Activated CD4-positive, alpha-beta memory T cell treated with anti-CD3 and anti-CD28 coated beads, Interleukin-2, amount 10 ng/mL, durations not matched to agents 7 days and 5 days (primary cell): ENCODE measurements at regions of chr2 and their contacts with region 1.

Region 1: DNA sequence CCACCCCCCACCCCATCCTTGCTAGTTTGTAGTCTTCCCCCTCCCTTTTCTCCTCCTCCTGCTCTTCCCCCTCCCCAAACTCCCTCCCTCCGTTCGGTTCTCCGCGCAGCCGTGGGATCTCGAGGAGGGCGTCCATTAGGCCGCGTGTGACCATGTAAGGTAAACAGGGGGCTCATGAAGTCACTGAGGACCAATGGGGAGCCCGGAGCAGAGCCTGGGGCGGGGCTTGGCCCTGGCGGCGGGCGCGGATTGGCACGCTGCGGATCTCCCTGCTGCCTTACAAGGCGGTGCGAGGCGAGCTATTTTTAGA is 246 bp upstream of the KLF7 start:
- DNase-seq: peak; percentile 98
- H3K4me3 Mint-ChIP-seq: peak overlapping the region; percentile 98
- H3K27ac Mint-ChIP-seq: peak overlapping the region; percentile 93
- H3K4me1 Mint-ChIP-seq: peaks cover 39% of the 10 kb centered on the region
- H3K27me3 Mint-ChIP-seq: peaks cover 9% of the 10 kb centered on the region

Region 2: DNA sequence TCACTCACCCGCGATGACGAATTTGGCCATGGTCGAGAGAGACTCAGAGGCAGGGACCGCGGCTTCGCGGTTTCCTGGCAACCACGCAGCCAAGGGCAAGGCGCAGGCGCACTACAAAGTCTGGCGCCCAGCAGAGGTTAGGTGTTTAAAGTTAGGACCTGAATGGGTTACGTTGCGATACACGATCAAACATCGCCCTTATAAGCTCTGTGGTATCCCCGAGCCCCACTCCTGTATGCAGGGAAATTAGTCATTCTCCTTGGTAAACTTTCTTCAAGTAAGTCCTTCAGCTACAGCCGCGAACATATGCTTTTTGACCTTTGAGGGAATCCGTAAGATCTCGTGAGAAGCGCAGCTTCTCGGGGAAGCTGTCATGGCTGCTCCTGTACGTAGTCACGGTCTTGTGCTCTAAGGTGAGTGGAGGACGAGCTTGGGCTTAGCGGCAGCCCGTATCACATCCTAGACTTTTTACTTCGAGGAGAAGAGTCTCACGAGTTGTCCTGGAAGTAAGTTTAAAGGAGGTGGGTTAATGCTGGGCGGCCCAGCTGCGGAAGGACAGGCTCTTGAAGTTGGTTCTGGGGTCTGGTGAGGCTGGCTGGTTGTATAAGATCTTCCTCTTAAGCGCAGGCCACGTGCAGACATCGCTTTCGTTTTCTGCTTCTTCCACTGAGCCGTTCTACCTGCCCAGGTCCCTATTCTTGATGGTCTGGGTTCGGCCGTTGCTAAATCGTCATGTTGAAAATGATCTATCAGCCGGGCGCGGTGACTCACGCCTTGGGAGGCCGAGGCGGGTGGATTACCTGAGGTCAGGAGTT is 400.5 kb before region 1 on chr2 and contains the starts of genes FASTKD2 and MDH1B:
- CTCF ChIA-PET with region 1: no interaction called
- POLR2A ChIA-PET with region 1: interaction called, 13 read pairs
- DNase-seq: peak; percentile 88
- H3K4me3 Mint-ChIP-seq: peak within 1 kb of the TSS; percentile 88
- H3K27ac Mint-ChIP-seq: peak within 1 kb of the TSS; percentile 89
- H3K4me1 Mint-ChIP-seq: peaks cover 34% of the 10 kb centered on the region
- H3K27me3 Mint-ChIP-seq: peaks cover 3% of the 10 kb centered on the region
- total RNA-seq, gene FASTKD2: 15.4 to 15.7 TPM
- total RNA-seq, gene MDH1B: 0.08 to 0.15 TPM

Region 3: DNA sequence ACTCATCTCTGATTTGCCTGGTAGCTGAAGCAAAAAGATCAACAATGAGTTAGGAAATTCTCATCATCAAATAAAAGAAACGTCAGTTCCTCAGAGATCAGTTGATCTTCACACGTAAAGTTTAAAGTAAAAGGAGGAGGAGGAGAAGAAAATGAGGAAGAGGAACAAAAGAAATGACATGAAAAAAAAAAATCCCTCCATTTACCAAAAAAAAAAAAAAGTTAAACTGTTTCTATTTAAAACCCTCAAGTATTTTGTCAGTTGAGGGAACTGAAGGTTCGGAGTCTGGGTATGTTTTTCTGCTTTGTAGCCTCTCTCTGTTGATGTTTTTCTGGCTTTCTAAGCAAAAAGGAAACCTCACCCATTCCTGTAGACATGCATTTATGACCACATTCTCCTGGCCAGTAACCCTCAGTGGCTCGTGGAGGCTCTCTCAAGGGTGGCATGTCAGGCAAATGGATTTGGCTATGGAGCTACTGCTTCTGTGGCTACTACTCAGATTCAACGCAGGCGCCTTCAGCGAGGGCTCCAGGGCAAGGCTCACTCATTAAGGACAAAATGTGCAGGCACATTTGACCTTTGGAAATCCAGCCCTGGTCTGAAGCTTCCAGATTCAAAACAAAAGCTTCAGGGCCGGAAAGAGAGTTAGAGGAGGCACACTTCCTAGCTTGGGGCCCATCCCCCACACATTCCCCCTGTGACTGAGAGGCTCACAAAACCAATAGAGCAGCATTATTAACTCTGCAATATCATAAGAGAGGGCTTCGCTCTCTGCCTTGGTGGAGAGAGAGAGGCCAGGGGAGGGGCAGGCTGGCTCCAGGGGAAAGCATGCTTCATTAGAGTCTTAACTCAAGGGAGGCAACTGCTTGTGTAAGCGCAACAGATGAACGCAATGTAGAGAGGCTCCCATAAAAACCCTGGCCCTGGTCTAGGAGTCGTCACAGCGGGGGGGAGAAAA is 22.5 kb before region 1 on chr2:
- CTCF ChIA-PET with region 1: interaction called, 49 read pairs
- POLR2A ChIA-PET with region 1: interaction called, 276 read pairs
- DNase-seq: peak; percentile 75
- H3K4me3 Mint-ChIP-seq: peak overlapping the region; percentile 63
- H3K27ac Mint-ChIP-seq: peak overlapping the region; percentile 98
- H3K4me1 Mint-ChIP-seq: peaks cover 64% of the 10 kb centered on the region
- H3K27me3 Mint-ChIP-seq: no peaks in the 10 kb centered on the region

Region 4: DNA sequence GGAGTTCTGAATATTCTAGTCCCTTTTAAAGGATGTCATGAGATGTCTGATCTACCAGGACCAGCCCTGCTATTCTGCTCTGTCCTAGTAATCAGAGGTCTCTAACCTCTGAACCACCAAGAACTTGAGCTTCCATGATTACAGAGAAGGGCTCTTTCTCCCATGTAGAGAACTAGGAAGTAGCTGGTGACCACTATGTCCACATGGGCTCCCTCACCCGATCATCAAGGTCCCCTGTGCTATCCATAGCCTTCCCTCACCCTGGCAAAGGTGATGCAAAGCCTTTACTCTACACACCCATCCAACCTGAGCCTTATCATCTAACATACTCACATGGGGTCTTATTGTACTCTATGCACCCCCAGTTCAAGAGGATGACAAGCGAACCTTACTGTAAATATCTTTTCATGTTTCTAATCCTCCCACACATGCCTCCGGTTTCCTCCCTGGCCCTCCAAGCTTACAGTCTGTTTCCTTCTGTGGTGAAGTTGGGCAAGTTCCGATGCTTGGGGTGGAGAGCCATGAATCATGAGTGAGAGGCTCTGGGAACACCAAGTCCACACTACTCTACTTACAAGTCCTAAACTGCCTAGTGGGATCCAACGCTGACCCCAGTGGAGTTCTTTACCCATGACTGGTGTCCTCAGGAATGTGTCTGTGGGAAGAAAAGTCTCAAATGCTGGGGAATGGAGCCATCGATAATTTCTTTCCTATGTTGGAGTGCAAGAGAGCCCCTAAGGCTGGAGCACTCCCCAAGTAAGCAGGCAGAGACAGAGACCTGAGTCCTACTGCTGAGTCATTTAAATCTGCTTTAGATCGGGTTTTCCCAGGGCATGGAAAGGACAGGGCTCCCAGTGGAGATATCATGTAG is 73.1 kb after region 1 on chr2:
- CTCF ChIA-PET with region 1: no interaction called
- POLR2A ChIA-PET with region 1: interaction called, 14 read pairs
- DNase-seq: peak; percentile 28
- H3K4me3 Mint-ChIP-seq: no peak overlapping the region
- H3K27ac Mint-ChIP-seq: no peak overlapping the region
- H3K4me1 Mint-ChIP-seq: peaks cover 15% of the 10 kb centered on the region
- H3K27me3 Mint-ChIP-seq: no peaks in the 10 kb centered on the region

Region 5: DNA sequence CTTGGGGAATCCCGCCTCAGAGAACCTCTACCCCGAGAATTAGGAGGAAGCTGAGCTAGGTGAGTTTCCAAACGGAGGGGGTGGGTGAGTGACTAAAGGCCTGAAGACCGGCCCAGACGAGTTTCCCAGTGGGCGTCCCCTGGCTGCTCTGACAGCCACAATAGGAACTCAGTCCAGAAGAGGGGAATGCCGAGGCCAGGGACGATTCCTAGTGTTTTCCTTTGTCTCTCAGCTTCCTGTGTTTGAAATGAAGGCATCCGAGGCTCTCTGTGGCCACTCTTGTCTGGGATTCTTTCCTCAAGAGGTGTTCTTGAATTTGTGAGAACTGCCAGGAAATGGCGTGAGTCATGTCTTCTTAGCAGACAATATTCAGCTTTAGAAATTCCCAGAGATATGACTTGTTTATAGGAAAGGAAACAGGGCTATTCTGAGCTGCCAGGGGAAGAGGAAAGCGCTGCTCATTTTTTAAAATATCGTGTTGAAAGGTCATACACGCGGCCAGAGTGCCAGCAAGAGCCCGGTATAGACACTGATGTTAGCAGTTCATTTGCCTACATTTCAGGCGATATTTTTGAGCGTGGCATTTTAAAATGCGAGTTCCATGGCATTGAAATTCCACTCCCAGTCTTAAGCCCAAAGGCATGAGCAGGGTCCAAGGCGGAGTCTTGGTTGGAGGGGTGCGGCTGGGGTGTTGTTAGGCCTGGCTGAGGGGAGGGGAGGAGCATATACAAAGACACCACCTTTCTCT is 168.8 kb after region 1 on chr2:
- CTCF ChIA-PET with region 1: interaction called, 3 read pairs
- POLR2A ChIA-PET with region 1: interaction called, 110 read pairs
- DNase-seq: peak; percentile 45
- H3K4me3 Mint-ChIP-seq: peak overlapping the region; percentile 68
- H3K27ac Mint-ChIP-seq: peak overlapping the region; percentile 87
- H3K4me1 Mint-ChIP-seq: peaks cover 79% of the 10 kb centered on the region
- H3K27me3 Mint-ChIP-seq: no peaks in the 10 kb centered on the region